ENCODE measurements at regions of chr1 and their contacts with region 1.

Region 1: GRCh38 chr1:151739590-151740375 is 18.5 kb downstream of the RIIAD1 start:
- DNase-seq: no peak
- H3K4me3 Mint-ChIP-seq: no peak overlapping the region
- H3K27ac Mint-ChIP-seq: no peak overlapping the region
- H3K4me1 Mint-ChIP-seq: peaks cover 6% of the 10 kb centered on the region
- H3K27me3 Mint-ChIP-seq: peaks cover 30% of the 10 kb centered on the region
- CTCF ChIP-seq: no peak

Region 2: GRCh38 chr1:151277249-151277648 is 462.5 kb before region 1 on chr1:
- CTCF ChIA-PET with region 1: no interaction called
- POLR2A ChIA-PET with region 1: no interaction called
- intact Hi-C with region 1: no loop called
- DNase-seq: no peak
- H3K4me3 Mint-ChIP-seq: no peak overlapping the region
- H3K27ac Mint-ChIP-seq: no peak overlapping the region
- H3K4me1 Mint-ChIP-seq: peaks cover 7% of the 10 kb centered on the region
- H3K27me3 Mint-ChIP-seq: peaks cover 14% of the 10 kb centered on the region
- CTCF ChIP-seq: no peak

Region 3: DNA sequence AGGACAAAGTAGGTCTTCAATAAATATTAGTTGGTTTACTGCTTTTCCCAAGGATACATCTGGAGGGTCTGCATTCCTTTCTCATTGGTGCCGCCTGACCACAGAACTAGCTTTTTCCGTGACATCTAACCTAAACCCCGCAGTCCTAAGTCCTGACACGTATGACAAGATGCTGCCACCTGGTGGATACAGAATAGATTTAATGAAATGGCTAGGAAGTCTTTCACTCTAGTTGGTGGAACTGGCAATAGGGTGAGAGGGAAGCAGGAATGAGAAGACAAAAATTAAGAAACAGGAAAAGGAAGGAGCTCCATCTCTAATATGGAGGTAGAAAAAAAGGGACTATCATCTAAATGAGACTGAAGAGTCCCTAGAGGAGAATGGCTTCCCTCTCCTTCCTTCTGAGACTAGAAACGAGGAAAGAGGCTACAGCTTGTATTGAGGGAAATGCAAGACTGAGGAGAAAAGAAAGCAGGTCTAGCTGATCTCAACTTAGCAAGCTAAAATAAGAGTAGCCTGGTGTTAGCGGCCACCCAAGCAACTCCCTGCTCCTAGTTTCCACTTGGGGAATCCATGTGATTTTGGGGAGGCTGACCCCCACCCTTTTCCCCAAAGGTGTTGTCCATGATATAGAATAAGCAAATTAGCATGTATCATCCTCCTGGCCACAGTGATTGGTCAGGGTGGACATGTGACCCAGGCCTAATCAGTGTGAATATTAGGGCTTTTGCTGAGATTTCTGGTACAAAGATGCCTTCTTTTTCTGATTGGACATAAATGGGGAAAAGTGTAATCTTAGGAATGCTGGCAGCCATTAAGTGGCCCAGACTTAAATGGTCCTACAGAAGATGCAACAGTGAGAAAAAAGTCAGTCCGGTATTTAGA is 398.7 kb before region 1 on chr1:
- CTCF ChIA-PET with region 1: interaction called, 4 read pairs
- POLR2A ChIA-PET with region 1: no interaction called
- intact Hi-C with region 1: loop called (anchors 1 kb)
- DNase-seq: peak; percentile 94
- H3K4me3 Mint-ChIP-seq: no peak overlapping the region
- H3K27ac Mint-ChIP-seq: no peak overlapping the region
- H3K4me1 Mint-ChIP-seq: peaks cover 11% of the 10 kb centered on the region
- H3K27me3 Mint-ChIP-seq: no peaks in the 10 kb centered on the region
- CTCF ChIP-seq: peak; percentile 74

Region 4: GRCh38 chr1:151384584-151384983 is 355.2 kb before region 1 on chr1:
- CTCF ChIA-PET with region 1: no interaction called
- POLR2A ChIA-PET with region 1: no interaction called
- intact Hi-C with region 1: no loop called
- DNase-seq: no peak
- H3K4me3 Mint-ChIP-seq: no peak overlapping the region
- H3K27ac Mint-ChIP-seq: no peak overlapping the region
- H3K4me1 Mint-ChIP-seq: no peaks in the 10 kb centered on the region
- H3K27me3 Mint-ChIP-seq: no peaks in the 10 kb centered on the region
- CTCF ChIP-seq: no peak

Region 5: GRCh38 chr1:151534665-151535278 is 205.0 kb before region 1 on chr1:
- CTCF ChIA-PET with region 1: interaction called, 53 read pairs
- POLR2A ChIA-PET with region 1: interaction called, 4 read pairs
- intact Hi-C with region 1: loop called (anchors 1 kb)
- DNase-seq: peak; percentile 89
- H3K4me3 Mint-ChIP-seq: no peak overlapping the region
- H3K27ac Mint-ChIP-seq: no peak overlapping the region
- H3K4me1 Mint-ChIP-seq: peaks cover 28% of the 10 kb centered on the region
- H3K27me3 Mint-ChIP-seq: no peaks in the 10 kb centered on the region
- CTCF ChIP-seq: peak; percentile 95

Region 6: DNA sequence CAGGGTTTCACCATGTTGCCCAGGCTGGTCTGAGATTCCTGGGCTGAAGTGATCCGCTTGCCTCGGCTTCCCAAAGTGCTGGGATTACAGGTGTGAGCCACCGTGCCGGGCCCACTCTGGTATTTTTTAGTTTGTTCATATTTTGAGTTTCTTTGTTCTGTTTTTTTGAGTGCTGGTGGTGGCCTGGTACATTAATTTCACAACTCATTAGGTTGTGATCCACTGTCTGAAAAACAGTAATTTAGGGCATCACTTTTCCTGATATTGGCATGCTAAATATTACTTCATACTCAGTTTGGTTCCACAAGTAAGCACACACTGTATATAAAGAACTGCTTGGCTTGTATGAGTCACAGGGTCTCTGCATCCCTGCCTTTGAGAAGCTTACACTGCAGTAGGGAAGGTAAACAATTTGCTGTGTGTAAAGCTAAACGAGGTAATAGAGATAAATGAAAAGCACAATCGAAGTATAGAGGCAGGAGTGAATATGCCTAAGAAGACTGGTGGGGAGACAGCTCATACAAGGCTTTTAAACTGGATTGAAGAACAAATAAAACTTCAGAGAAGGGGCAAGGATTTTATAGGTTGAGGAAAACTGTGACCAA is 120.2 kb before region 1 on chr1:
- CTCF ChIA-PET with region 1: interaction called, 11 read pairs
- POLR2A ChIA-PET with region 1: interaction called, 5 read pairs
- intact Hi-C with region 1: no loop called
- DNase-seq: peak; percentile 58
- H3K4me3 Mint-ChIP-seq: no peak overlapping the region
- H3K27ac Mint-ChIP-seq: peak overlapping the region; percentile 17
- H3K4me1 Mint-ChIP-seq: peaks cover 37% of the 10 kb centered on the region
- H3K27me3 Mint-ChIP-seq: no peaks in the 10 kb centered on the region
- CTCF ChIP-seq: no peak

Region 7: DNA sequence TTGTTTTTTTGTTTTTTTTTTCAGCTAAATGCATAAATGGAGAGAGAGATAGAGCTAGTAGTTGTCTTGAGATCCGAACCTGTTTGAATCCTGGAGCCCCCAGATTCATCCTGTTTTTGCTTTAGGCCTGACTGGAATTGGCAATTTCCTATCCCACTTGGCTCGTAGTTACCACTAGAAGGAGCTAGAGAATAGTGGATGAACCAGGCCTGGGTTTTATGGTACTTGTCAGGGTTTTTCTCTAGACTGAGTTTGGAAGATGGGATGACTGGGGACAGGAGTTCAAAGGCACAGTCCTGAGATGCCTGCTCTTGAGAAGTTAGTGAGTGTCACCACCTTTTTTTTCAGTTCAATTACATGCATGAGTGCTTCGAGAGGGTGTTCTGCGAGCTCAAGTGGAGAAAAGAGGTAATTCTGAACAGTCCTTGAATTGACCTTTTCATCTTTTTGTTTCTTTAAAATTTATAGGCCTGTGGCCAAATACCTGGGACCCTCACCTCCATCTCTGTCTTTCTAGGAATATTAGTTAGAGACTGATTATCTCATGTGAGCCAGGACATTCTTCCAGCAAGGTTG is 46.6 kb before region 1 on chr1:
- CTCF ChIA-PET with region 1: interaction called, 37 read pairs
- POLR2A ChIA-PET with region 1: interaction called, 4 read pairs
- intact Hi-C with region 1: loop called (anchors 2 kb)
- DNase-seq: peak; percentile 60
- H3K4me3 Mint-ChIP-seq: no peak overlapping the region
- H3K27ac Mint-ChIP-seq: peak overlapping the region; percentile 43
- H3K4me1 Mint-ChIP-seq: no peaks in the 10 kb centered on the region
- H3K27me3 Mint-ChIP-seq: no peaks in the 10 kb centered on the region
- CTCF ChIP-seq: peak; percentile 74

Measured in MCF 10A (cell line).